ENCODE measurements at regions of chr22 and their contacts with region 1.

Region 1: GRCh38 chr22:40436505-40437451 is 66.4 kb downstream of the SGSM3 start:
- DNase-seq: peak; percentile 54
- ATAC-seq: peak; percentile 71
- H3K4me3 Mint-ChIP-seq: peak overlapping the region; percentile 10
- H3K27ac Mint-ChIP-seq: peak overlapping the region; percentile 81
- H3K4me1 Mint-ChIP-seq: peaks cover 48% of the 10 kb centered on the region
- H3K27me3 Mint-ChIP-seq: no peaks in the 10 kb centered on the region

Region 2: DNA sequence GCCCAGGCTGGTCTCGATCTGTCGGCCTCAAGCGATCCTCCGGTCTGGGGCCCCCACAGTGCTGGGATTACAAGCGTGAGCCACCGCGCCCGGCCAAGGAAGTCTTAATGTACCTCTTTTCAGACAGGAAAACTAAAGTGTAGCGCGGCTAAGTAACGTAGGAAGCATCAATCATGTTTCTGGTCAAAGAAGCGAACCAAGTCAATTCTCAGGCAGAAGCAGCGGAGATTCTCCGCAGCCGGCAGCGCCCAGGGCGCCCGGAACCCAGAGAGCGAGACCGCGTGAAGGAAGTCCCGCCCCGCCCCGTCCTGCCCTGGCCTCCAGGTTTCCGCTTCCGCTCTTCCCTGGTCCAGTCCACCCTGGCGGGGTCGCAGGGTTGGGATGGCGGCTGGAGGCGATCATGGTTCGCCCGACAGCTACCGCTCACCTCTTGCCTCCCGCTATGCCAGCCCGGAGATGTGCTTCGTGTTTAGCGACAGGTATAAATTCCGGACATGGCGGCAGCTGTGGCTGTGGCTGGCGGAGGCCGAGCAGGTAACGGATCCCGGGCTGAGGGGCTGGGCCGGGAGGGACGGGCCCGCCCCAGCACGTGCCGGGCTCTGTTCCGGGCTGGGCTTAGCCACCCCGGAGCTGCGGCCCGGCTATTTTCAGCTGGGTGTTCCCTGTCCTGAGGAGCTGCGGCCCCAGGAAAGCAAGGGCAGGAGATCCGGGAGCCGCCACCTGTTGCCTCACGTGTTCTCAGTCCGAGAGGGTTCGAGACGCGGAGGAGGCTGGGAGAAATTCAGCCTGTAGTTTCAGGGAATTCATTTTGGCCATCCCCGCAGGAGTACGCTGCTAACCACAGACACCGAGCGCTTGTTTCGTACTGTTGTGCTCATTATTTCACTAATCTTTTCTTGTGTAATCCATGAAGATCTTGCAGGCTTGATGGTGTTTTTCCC is 90.3 kb before region 1 on chr22 and contains the start of gene ADSL:
- CTCF ChIA-PET with region 1: no interaction called
- DNase-seq: peak; percentile 90
- ATAC-seq: peak; percentile 92
- H3K4me3 Mint-ChIP-seq: peak within 1 kb of the TSS; percentile 99
- H3K27ac Mint-ChIP-seq: peak within 1 kb of the TSS; percentile 99
- H3K4me1 Mint-ChIP-seq: peaks cover 50% of the 10 kb centered on the region
- H3K27me3 Mint-ChIP-seq: no peaks in the 10 kb centered on the region
- total RNA-seq, gene ADSL: 98.3 to 109 TPM

Region 3: DNA sequence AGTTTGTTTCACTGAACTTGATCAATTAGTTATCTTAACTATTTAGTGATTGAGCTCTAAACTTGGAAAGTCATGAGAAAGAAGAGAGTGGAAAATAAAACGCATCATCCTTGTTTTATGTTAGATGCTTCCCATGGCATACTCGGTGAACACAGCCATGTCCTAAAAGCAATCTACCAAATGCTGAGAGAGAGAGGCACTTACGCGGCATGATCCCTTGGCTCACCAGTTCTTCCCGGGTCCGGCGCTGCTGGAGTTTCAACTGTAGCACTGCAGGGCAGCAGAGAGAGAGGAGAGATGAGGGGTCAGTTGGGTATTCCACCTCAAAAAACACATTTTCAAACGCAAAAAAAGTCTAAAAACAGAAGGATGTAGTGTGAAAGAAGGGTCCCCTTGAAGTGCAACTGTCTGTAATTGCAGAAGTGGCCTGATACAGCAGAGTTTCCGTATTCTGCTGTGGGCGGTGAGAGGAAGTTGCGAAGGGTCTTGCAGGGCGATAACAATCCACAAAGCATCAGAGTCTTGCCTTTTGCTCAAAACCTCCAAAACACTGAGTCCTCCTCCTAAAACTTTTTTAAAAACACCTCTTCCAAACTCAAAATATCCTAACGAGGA is 26.3 kb after region 1 on chr22:
- CTCF ChIA-PET with region 1: interaction called, 28 read pairs
- DNase-seq: peak; percentile 77
- ATAC-seq: peak; percentile 83
- H3K4me3 Mint-ChIP-seq: peak overlapping the region; percentile 87
- H3K27ac Mint-ChIP-seq: peak overlapping the region; percentile 99
- H3K4me1 Mint-ChIP-seq: peaks cover 44% of the 10 kb centered on the region
- H3K27me3 Mint-ChIP-seq: no peaks in the 10 kb centered on the region

Region 4: DNA sequence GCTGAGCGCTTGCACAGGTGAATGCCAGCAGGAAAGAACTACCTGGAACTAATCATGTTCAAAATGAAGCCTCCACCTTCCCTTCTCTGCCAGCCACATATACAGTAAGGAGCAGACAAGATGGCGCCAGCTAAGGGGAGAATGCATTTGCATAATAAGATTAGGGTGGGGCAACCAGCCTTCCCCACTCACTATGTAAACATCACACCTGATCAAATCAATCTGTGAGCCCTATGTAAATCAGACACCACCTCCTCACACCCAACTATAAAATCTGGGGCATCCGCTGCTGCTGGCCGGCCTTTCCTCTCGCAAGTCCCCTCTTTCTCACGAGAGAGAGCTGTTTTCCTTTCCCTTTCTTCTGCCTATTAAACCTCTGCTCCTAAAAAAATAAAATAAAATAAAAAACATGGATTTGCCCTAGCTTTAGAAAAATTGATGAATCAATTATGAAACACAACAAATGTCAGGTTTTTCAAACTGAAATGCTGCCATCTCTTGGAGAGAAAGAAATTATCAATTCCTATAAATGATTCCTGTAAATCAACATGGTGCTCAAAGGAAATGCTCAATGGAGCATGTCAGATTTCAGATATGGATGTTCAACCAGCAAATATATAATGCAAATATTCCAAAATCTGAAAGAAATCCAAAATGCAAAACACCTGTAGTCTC is 42.5 kb after region 1 on chr22:
- CTCF ChIA-PET with region 1: interaction called, 91 read pairs
- DNase-seq: no peak
- ATAC-seq: no peak
- H3K4me3 Mint-ChIP-seq: no peak overlapping the region
- H3K27ac Mint-ChIP-seq: no peak overlapping the region
- H3K4me1 Mint-ChIP-seq: peaks cover 26% of the 10 kb centered on the region
- H3K27me3 Mint-ChIP-seq: no peaks in the 10 kb centered on the region

Region 5: DNA sequence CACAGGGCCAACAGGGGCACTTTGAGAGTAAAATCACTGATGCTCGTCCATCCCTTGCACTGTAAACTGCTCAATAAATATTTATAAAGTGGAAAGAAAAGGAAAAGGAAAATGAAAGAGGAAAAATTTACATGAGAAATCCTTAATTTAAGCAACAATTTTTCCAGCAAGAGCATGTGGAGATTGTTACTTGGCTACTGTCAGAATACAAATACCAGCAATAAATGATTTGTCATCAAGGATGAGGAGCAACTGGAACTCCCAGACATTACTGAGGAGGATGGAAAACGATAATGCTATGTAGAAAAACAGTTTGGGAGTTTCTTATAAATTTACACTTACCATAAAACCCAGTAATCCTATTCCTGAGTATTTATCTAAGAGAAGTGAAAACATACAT is 56.7 kb after region 1 on chr22:
- CTCF ChIA-PET with region 1: interaction called, 91 read pairs
- DNase-seq: no peak
- ATAC-seq: no peak
- H3K4me3 Mint-ChIP-seq: no peak overlapping the region
- H3K27ac Mint-ChIP-seq: no peak overlapping the region
- H3K4me1 Mint-ChIP-seq: peaks cover 11% of the 10 kb centered on the region
- H3K27me3 Mint-ChIP-seq: no peaks in the 10 kb centered on the region

Region 6: DNA sequence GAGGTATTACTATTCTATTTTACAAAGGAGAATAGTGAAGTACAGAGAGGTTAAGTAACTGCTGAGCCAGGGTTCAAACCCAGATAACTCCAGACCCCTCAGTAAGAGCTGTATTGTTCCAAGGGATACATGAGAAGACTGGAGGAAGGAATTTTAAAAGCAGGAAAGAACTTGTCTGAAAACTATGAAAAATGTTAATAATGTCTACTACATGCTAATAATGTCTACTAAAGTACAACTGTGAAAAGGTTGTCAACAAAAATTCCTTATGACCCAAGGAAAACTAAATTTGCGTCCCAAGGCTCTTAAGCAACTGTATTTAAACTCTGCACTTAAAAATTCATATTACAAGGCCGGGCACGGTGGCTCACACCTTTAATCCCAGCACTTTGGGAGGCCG is 152.6 kb after region 1 on chr22:
- CTCF ChIA-PET with region 1: no interaction called
- DNase-seq: no peak
- ATAC-seq: no peak
- H3K4me3 Mint-ChIP-seq: no peak overlapping the region
- H3K27ac Mint-ChIP-seq: no peak overlapping the region
- H3K4me1 Mint-ChIP-seq: peaks cover 10% of the 10 kb centered on the region
- H3K27me3 Mint-ChIP-seq: no peaks in the 10 kb centered on the region

Region 7: GRCh38 chr22:40645579-40646197 is 208.9 kb after region 1 on chr22:
- CTCF ChIA-PET with region 1: interaction called, 98 read pairs
- DNase-seq: no peak
- ATAC-seq: no peak
- H3K4me3 Mint-ChIP-seq: no peak overlapping the region
- H3K27ac Mint-ChIP-seq: no peak overlapping the region
- H3K4me1 Mint-ChIP-seq: peaks cover 19% of the 10 kb centered on the region
- H3K27me3 Mint-ChIP-seq: no peaks in the 10 kb centered on the region

Region 8: DNA sequence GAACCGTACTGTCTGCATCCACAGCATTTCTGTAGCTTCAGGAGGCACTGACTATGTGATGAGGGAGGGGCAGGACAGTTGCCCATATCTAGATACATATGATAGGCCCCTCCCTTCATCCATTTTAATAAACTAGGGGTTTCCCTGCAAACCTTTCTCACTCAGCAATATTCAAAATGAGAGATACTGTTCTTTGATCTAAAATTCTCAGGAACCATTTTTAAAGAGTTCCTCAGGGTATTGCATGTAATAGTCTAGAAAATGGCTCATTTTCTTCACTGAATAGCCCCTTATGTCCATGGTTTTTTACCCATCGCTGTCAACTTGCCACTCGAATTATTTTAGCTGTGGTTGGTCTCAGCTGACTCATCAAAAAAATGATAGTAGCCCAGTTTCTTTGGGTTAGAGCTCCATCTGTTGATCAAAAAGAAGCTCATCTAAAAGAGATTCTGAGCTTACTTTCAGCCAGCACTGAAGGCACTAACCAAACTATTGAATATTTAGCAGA is 462.1 kb after region 1 on chr22:
- CTCF ChIA-PET with region 1: interaction called, 23 read pairs
- DNase-seq: no peak
- ATAC-seq: peak; percentile 80
- H3K4me3 Mint-ChIP-seq: peak overlapping the region; percentile 33
- H3K27ac Mint-ChIP-seq: peak overlapping the region; percentile 71
- H3K4me1 Mint-ChIP-seq: peaks cover 16% of the 10 kb centered on the region
- H3K27me3 Mint-ChIP-seq: no peaks in the 10 kb centered on the region